ENCODE measurements at regions of chr2 and their contacts with region 1.

Region 1: DNA sequence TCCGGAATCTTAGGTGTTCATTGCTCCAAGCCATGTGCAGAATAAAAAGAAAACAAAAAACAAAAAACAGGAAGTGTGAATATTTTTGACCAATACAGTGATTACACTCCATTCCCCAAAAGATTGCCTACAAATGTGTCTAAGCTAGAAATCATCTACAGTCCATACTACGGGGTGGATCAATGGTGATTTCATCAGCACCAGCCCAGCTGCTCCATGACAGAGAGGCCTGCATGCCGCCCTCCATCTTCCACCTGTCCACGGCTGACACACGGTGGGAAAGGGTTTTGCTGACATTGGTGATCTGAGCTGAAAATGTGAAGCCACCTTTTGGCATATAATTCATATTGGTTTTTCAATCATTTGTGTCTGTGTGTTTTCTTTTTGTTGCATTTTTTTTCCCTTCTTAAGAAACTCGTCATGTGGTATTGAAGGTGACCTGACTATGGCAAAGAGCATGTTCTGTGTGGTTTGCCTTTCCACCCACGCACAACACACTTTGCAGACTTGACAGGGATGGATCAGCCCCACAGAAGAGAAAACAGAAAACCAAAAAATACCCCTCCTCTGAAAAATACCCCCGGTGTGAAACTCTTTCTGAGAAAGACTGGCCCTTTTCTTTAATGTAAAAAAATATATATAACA is 533.1 kb downstream of the RNF144A start:
- DNase-seq: peak in 6 of 9 experiments; percentile 41 to 90 (median 68)
- ATAC-seq: peak; percentile 80
- H3K4me3 ChIP-seq: no peak overlapping the region
- H3K4me3 Mint-ChIP-seq: peak overlapping the region; percentile 65
- H3K27ac ChIP-seq: peak overlapping the region; percentile 51 to 81
- H3K27ac Mint-ChIP-seq: peak overlapping the region; percentile 98
- H3K4me1 ChIP-seq: peaks cover 70% of the 10 kb centered on the region
- H3K4me1 Mint-ChIP-seq: peaks cover 85% of the 10 kb centered on the region
- H3K27me3 ChIP-seq: no peaks in the 10 kb centered on the region
- H3K27me3 Mint-ChIP-seq: no peaks in the 10 kb centered on the region
- CTCF ChIP-seq: no peak

Region 2: DNA sequence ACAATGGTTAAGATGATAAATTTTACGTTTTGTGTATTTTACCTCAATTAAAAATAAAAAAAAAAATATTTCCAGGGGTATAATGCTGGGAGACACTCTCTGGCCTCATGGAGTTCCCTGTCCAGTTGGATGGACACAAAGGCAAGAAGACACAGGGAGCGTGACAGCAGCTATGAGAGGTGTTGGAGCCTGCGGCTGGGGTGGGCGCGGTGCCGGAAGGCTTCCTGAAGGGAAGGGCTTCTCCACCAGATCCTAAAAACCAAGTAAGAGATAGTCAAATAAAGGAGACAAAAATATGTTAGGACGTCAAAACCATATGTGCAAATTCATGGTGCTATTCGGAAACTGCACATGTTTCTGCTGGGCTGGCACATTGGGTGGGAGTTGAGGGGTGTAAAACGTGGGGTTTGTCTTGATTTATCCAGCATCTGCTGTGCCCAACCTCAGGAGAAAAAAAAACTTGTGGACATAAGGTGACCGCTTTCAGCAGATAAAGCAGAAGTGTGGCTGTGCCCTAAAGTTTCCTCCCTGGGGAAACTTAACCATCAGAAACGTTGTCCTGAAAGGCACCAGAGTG is 65.4 kb before region 1 on chr2:
- CTCF ChIA-PET with region 1: no interaction called
- POLR2A ChIA-PET with region 1: no interaction called
- intact Hi-C with region 1: no loop called
- DNase-seq: no peak
- ATAC-seq: no peak
- H3K4me3 ChIP-seq: no peak overlapping the region
- H3K4me3 Mint-ChIP-seq: no peak overlapping the region
- H3K27ac ChIP-seq: no peak overlapping the region
- H3K27ac Mint-ChIP-seq: no peak overlapping the region
- H3K4me1 ChIP-seq: no peaks in the 10 kb centered on the region
- H3K4me1 Mint-ChIP-seq: no peaks in the 10 kb centered on the region
- H3K27me3 ChIP-seq: no peaks in the 10 kb centered on the region
- H3K27me3 Mint-ChIP-seq: peaks cover 4% of the 10 kb centered on the region
- CTCF ChIP-seq: no peak

Region 3: GRCh38 chr2:7437716-7438632 is 12.3 kb before region 1 on chr2:
- CTCF ChIA-PET with region 1: interaction called, 3 read pairs
- POLR2A ChIA-PET with region 1: interaction called, 11 read pairs
- intact Hi-C with region 1: loop called in 1 of 2 experiments (anchors 2 kb)
- DNase-seq: peak in 1 of 9 experiments; percentile 34
- ATAC-seq: no peak
- H3K4me3 ChIP-seq: no peak overlapping the region
- H3K4me3 Mint-ChIP-seq: no peak overlapping the region
- H3K27ac ChIP-seq: peak overlapping the region in 1 of 2 experiments; percentile 73
- H3K27ac Mint-ChIP-seq: peak overlapping the region; percentile 74
- H3K4me1 ChIP-seq: peaks cover 39% of the 10 kb centered on the region
- H3K4me1 Mint-ChIP-seq: peaks cover 70% of the 10 kb centered on the region
- H3K27me3 ChIP-seq: no peaks in the 10 kb centered on the region
- H3K27me3 Mint-ChIP-seq: no peaks in the 10 kb centered on the region
- CTCF ChIP-seq: no peak

Region 4: DNA sequence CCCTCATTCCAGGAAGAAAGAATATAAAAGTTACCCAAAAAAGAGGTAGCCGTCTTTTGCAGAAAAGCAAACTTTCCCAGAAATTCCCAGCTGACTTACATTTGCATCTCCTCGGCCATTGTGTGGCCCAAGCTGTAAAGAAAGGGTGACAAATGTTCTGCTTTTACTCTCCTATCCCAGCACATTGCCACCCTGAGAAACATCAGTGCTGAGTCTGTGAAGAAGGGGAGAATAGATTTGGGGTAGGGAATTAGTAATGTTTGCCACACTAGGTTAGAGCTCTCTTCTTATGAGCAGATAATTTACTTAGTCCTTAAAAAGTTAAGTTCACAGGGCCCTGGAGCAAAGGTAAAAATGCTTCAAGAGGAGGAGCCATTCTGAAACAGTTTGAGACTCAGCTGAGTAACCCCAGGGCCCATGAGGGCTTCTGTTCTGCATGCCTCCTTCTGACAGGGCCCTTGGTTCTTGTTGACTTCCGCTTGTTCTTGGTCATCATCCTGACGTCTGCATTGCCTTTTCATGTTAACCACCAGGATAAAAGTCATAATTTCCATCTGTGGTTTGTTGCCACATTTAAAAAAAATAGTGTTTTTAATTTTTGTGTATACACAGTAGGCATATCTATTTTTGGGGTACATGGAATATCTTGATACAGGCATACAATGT is 17.6 kb after region 1 on chr2:
- CTCF ChIA-PET with region 1: interaction called, 3 read pairs
- POLR2A ChIA-PET with region 1: interaction called, 3 read pairs
- intact Hi-C with region 1: loop called (anchors 1 to 2 kb)
- DNase-seq: peak in 5 of 9 experiments; percentile 45 to 86 (median 72)
- ATAC-seq: peak; percentile 95
- H3K4me3 ChIP-seq: no peak overlapping the region
- H3K4me3 Mint-ChIP-seq: peak overlapping the region; percentile 26
- H3K27ac ChIP-seq: peak overlapping the region; percentile 24 to 60
- H3K27ac Mint-ChIP-seq: peak overlapping the region; percentile 88
- H3K4me1 ChIP-seq: peaks cover 31% of the 10 kb centered on the region
- H3K4me1 Mint-ChIP-seq: peaks cover 49% of the 10 kb centered on the region
- H3K27me3 ChIP-seq: no peaks in the 10 kb centered on the region
- H3K27me3 Mint-ChIP-seq: no peaks in the 10 kb centered on the region
- CTCF ChIP-seq: no peak

Region 5: GRCh38 chr2:7510350-7510749 is 60.0 kb after region 1 on chr2:
- CTCF ChIA-PET with region 1: interaction called, 3 read pairs
- POLR2A ChIA-PET with region 1: interaction called, 6 read pairs
- intact Hi-C with region 1: loop called (anchors 5 kb)
- DNase-seq: no peak
- ATAC-seq: no peak
- H3K4me3 ChIP-seq: no peak overlapping the region
- H3K4me3 Mint-ChIP-seq: no peak overlapping the region
- H3K27ac ChIP-seq: no peak overlapping the region
- H3K27ac Mint-ChIP-seq: no peak overlapping the region
- H3K4me1 ChIP-seq: peaks cover 27% of the 10 kb centered on the region
- H3K4me1 Mint-ChIP-seq: peaks cover 40% of the 10 kb centered on the region
- H3K27me3 ChIP-seq: no peaks in the 10 kb centered on the region
- H3K27me3 Mint-ChIP-seq: no peaks in the 10 kb centered on the region
- CTCF ChIP-seq: no peak

Region 6: GRCh38 chr2:7517088-7517487 is 66.8 kb after region 1 on chr2:
- CTCF ChIA-PET with region 1: no interaction called
- POLR2A ChIA-PET with region 1: interaction called, 6 read pairs
- intact Hi-C with region 1: loop called (anchors 5 kb)
- DNase-seq: peak in 8 of 9 experiments; percentile 4 to 83 (median 50)
- ATAC-seq: peak; percentile 95
- H3K4me3 ChIP-seq: peak overlapping the region in 1 of 2 experiments; percentile 23
- H3K4me3 Mint-ChIP-seq: peak overlapping the region; percentile 69
- H3K27ac ChIP-seq: peak overlapping the region; percentile 44 to 61
- H3K27ac Mint-ChIP-seq: peak overlapping the region; percentile 93
- H3K4me1 ChIP-seq: peaks cover 48% of the 10 kb centered on the region
- H3K4me1 Mint-ChIP-seq: peaks cover 58% of the 10 kb centered on the region
- H3K27me3 ChIP-seq: no peaks in the 10 kb centered on the region
- H3K27me3 Mint-ChIP-seq: no peaks in the 10 kb centered on the region
- CTCF ChIP-seq: no peak